ENCODE measurements at regions of chr10 and their contacts with region 1.

Region 1: GRCh38 chr10:78224602-78225001 is 190.9 kb downstream of the RPS24 start:
- DNase-seq: no peak
- ATAC-seq: no peak
- H3K4me3 ChIP-seq: no peak overlapping the region
- H3K27ac ChIP-seq: no peak overlapping the region
- H3K4me1 ChIP-seq: no peaks in the 10 kb centered on the region
- H3K27me3 ChIP-seq: no peaks in the 10 kb centered on the region

Region 2: GRCh38 chr10:78640796-78641636 is 416.4 kb after region 1 on chr10:
- intact Hi-C with region 1: loop called in 1 of 4 experiments (anchors 10 kb)
- DNase-seq: no peak
- ATAC-seq: peak; percentile 32 to 47
- H3K4me3 ChIP-seq: no peak overlapping the region
- H3K27ac ChIP-seq: no peak overlapping the region
- H3K4me1 ChIP-seq: peaks cover 3% of the 10 kb centered on the region
- H3K27me3 ChIP-seq: no peaks in the 10 kb centered on the region

Measured in right cardiac atrium (tissue), 5 donors.